Activated CD8-positive, alpha-beta T cell treated with anti-CD3 and anti-CD28 coated beads, Interleukin-2, amount 10 ng/mL, durations not matched to agents 7 days and 5 days (primary cell): ENCODE measurements at regions of chr22 and their contacts with region 1.

Region 1: GRCh38 chr22:31451709-31452571 is 37.7 kb downstream of the EIF4ENIF1 start:
- DNase-seq: peak; percentile 29
- ATAC-seq: peak; percentile 76
- H3K4me3 Mint-ChIP-seq: no peak overlapping the region
- H3K27ac Mint-ChIP-seq: no peak overlapping the region
- H3K4me1 Mint-ChIP-seq: peaks cover 3% of the 10 kb centered on the region
- H3K27me3 Mint-ChIP-seq: no peaks in the 10 kb centered on the region

Region 2: DNA sequence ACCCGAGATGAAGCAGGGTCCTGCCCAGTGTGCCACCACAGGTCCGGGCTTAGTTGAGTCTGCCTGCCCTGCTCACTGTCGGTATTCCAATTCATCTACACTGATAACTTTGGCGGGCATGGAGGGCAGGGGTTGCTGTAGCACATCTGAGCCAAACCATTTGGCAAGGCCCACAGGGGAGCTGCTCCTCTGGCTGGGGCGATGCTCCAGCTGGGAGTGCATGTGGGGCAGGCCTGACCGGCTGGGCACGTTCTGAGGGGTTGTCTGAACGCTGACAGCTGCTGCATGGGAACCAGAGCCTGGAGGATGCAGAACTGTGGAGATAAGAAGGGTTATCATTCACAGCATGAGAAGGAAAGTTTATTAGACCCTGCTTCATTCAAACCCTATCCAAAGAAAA is 12.1 kb before region 1 on chr22:
- CTCF ChIA-PET with region 1: interaction called, 11 read pairs
- POLR2A ChIA-PET with region 1: no interaction called
- DNase-seq: no peak
- ATAC-seq: no peak
- H3K4me3 Mint-ChIP-seq: no peak overlapping the region
- H3K27ac Mint-ChIP-seq: no peak overlapping the region
- H3K4me1 Mint-ChIP-seq: peaks cover 3% of the 10 kb centered on the region
- H3K27me3 Mint-ChIP-seq: no peaks in the 10 kb centered on the region

Region 3: DNA sequence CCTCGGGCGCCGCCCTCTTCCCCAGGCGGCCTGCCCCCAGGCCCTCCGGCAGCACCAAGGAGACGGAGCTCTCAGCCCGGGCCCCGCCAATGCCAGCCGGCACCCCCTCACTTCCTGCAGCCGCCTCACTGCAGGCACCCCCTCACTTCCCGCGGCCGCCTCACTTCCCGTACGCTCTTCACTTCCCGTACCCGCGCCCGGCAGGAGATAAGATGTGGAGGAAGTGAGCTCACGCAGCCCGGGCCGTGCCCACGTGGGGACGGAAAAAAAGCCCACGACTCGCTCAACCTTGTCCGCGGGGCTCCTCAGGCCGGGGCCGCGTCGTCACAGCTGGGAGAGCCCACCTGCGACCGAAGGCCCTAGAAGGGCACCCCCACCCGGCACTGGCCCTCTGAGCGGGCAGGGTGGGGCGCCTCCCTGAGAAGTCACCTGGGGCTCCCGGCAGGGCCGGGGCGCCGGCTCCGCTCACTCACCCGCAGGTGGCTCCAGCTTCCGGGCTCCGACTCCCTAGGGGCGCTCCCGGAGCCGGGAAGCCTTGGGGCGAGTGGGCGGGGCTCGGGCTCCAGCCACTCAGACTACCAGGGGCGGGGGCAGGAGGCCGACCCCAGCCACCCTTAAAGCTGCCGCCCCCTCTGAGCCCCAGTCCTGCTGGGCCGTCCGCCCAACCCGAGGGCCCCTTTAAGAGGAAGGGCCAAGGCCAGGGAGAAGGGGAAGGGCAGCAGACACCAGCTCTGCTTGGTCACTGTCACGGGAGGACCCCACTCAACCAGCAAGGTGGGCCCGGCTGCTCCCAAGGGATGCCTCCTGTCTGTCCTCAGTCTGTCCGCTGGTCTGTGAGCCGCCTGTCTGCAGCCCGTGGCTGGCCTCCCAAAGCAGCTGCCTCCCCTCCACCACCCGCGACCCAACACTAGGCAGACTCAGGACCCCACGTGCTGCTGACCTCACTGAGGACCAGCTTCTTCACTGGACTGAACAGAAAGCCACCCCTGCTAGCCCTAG is 178.7 kb after region 1 on chr22:
- CTCF ChIA-PET with region 1: interaction called, 18 read pairs
- POLR2A ChIA-PET with region 1: interaction called, 3 read pairs
- DNase-seq: peak; percentile 93
- ATAC-seq: peak; percentile 89
- H3K4me3 Mint-ChIP-seq: peak overlapping the region; percentile 83
- H3K27ac Mint-ChIP-seq: peak overlapping the region; percentile 96
- H3K4me1 Mint-ChIP-seq: peaks cover 42% of the 10 kb centered on the region
- H3K27me3 Mint-ChIP-seq: no peaks in the 10 kb centered on the region